ENCODE measurements at regions of chrX and their contacts with region 1.

Region 1: DNA sequence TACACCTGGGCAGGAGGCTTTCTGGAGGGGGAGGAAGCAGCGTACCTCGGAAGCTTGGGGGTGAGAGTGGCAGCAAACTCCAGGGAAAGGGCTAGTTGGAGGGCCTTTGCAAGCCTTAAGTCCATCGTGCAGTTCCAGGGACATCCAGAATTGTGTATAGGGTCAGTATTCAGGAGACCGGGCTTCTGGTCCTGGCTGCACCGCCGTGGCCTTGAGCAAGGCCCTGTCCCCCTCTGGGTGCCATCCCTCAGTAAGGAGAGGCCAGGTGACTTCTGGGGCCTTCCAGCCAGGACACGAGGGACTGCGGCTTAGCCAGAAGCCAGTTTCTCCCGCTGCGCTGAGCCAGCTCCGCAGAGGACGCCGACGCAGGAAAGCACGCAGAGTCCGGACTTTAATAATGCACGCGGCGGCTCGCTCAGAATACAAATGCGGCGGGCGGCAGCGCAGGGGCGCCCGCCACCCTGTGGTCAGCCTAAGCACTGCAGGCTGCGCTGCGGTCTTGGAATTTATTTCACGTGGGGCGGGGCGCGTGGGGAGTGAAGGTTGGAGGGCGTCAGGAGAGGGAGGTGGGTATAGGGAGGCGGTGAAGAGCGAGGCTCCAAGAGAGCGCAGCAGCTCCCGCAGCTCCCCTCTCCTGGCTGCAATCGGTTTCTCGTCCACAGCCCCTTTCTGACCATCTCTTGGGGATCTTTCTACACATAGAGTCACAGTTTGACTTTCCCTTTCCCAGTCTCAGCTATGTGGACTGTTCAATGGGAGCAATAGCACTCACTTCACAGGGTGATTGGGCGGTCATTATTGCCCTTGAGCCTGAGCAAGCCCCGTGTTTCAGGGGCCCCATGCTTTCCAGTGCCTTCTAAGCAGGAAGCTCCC is 94.1 kb upstream of the GPR50 start:
- DNase-seq: peak; percentile 64
- ATAC-seq: peak; percentile 88
- H3K4me3 Mint-ChIP-seq: no peak overlapping the region
- H3K27ac Mint-ChIP-seq: no peak overlapping the region
- H3K4me1 Mint-ChIP-seq: no peaks in the 10 kb centered on the region
- H3K27me3 Mint-ChIP-seq: peaks cover 25% of the 10 kb centered on the region

Region 2: DNA sequence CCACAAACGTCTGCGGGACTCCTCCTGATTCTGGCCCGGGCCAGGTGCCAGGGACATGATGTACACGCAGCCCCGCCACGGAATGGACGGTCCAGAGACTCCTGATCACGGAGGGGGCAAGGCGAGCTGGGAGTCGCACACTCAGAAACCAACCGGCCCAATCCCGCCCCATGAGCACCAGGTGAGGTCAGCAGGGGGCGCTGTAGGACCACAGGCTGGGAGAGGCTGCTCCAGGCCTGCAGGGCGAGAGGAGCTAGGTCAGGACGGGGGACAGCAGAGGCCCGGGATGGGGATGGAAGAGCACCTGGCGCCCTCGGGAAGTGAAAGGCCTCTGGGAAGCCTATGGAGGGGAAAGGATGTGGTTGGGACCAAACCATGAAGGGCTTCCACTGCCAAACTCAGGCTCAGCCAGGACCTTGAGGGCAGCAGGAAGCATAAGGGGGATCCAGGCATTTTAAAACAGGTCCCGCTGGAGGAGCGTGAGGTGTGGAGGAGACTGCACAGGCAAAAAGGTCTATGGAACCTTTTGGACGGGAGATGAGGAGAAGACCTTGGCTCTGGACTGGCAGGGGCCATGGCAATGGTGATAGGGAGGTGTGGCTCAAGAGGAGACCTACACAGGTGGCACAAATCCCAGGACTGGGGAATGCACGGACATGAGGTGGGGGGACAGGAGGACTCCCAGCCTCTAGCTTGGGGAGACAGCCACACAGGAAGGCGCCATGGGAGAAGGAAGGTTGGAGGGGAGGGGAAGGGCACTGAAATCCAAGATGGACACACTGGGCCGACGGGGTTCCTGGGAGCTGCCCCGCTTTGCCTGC is 310.0 kb before region 1 on chrX:
- CTCF ChIA-PET with region 1: interaction called, 60 read pairs
- POLR2A ChIA-PET with region 1: interaction called, 4 read pairs
- DNase-seq: peak; percentile 79
- ATAC-seq: peak; percentile 93
- H3K4me3 Mint-ChIP-seq: no peak overlapping the region
- H3K27ac Mint-ChIP-seq: peak overlapping the region; percentile 49
- H3K4me1 Mint-ChIP-seq: no peaks in the 10 kb centered on the region
- H3K27me3 Mint-ChIP-seq: no peaks in the 10 kb centered on the region

Region 3: DNA sequence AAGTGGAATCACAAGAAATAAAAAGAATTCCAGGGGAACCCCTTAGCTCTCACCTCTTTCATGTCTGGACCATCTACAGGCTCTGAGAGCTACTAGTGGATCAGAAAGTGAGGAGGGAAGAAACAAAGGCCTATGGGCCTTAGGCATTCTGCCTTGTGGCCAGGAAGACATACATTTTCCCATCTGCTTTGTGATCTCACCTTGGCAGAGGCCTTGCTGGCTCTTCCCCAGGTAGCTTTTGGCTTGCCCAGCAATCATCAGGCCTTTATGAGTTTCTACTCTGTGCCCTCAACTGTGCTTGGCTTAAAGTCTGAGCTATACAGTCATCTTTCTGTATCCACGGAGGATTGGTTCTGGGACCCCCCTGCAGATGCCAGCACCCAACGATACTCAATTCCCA is 155.5 kb before region 1 on chrX:
- CTCF ChIA-PET with region 1: no interaction called
- POLR2A ChIA-PET with region 1: no interaction called
- DNase-seq: no peak
- ATAC-seq: no peak
- H3K4me3 Mint-ChIP-seq: no peak overlapping the region
- H3K27ac Mint-ChIP-seq: no peak overlapping the region
- H3K4me1 Mint-ChIP-seq: no peaks in the 10 kb centered on the region
- H3K27me3 Mint-ChIP-seq: peaks cover 3% of the 10 kb centered on the region

Region 4: DNA sequence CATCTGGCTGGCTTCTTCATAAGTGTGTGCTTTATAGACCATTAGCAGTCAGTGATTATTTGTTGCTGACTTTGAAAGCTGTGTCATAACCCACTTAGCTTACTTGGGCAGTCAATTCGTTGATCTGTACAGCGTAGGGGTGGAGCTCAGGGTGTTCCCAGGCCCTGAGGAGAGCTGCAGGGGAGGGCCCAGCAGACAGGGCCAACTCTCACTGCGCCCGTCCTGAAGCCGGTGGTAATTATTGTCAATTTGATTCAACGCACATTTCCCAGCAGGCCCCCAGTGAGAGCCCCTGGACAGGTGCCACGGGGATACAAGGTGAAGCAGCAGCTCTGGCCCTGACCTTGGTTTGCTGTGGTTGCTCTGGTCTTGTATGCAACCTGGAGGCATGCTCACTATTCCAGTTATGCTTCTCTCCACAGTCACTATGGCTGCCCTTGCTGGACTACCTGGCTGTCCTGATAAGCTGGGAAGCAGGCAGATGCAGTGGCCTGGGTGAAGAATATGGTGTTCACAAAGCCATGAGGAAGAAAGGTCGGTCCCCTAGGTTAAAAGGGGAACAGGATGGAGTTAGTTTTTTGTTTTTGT is 139.2 kb before region 1 on chrX:
- CTCF ChIA-PET with region 1: no interaction called
- POLR2A ChIA-PET with region 1: no interaction called
- DNase-seq: no peak
- ATAC-seq: no peak
- H3K4me3 Mint-ChIP-seq: no peak overlapping the region
- H3K27ac Mint-ChIP-seq: no peak overlapping the region
- H3K4me1 Mint-ChIP-seq: no peaks in the 10 kb centered on the region
- H3K27me3 Mint-ChIP-seq: no peaks in the 10 kb centered on the region

Measured in activated CD8-positive, alpha-beta T cell treated with anti-CD3 and anti-CD28 coated beads, Interleukin-2, amount 10 ng/mL, durations not matched to agents 7 days and 5 days (primary cell).